ENCODE measurements at regions of chr3 and their contacts with region 1.

Region 1: GRCh38 chr3:13648060-13649001 is 99.4 kb downstream of the FBLN2 start:
- DNase-seq: peak; percentile 75
- ATAC-seq: peak; percentile 81
- H3K4me3 ChIP-seq: peak overlapping the region in 1 of 2 experiments; percentile 1; a peak in 1 of 4 replicates
- H3K27ac ChIP-seq: no peak overlapping the region
- H3K4me1 ChIP-seq: peaks cover 9 to 45% of the 10 kb centered on the region in 2 experiments; a peak in 3 of 4 replicates
- H3K27me3 ChIP-seq: no peaks in the 10 kb centered on the region
- CTCF ChIP-seq: peak in 2 of 3 experiments; percentile 98 to 99; a peak in 4 of 6 replicates
- POLR2A ChIP-seq: no peak
- RAD21 ChIP-seq: no peak

Region 2: DNA sequence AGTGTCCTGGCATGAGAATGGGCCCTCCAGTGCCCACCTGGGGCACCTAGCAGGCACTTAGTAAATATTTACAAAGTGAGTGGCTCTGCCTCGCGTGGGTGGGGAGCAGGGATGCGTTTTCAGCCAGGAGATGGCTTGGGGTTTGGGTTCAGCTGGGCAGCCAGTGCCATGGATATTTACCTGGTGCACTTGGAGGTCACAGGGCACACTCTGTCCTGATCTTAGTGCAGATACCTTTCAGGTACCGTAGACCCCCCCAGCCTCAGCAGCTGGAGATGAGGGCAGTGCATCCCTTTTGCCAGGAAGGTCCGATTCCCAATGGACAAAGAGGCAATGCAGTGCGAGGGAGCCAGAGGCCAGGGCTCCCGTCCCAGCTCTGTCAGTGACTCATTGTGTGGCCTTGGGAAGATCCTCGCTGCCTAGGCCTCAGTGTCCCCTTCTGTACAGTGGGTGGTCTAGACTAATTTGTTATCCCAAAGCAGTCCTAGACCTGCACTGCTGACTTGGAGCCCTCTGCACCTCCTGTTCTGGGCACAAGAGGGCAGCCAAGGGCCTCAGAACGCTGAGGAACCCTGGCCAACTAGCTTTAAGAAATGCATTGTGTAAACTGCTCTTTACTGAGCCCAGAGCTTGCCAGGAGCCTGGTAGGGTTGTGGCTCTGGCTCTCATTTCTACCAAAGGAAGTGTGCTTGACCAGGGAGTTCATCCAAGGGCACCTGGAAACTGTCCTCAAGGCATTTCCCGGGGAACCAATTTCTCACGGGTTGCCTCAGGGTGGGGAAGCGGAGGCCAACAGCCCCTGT is 152.2 kb before region 1 on chr3:
- CTCF ChIA-PET with region 1: interaction called, 245 read pairs
- POLR2A ChIA-PET with region 1: interaction called, 6 read pairs
- RAD21 ChIA-PET with region 1: interaction called, 24 to 34 read pairs
- intact Hi-C with region 1: loop called (anchors 1 kb)
- DNase-seq: peak; percentile 48
- ATAC-seq: peak; percentile 81
- H3K4me3 ChIP-seq: no peak overlapping the region
- H3K27ac ChIP-seq: no peak overlapping the region
- H3K4me1 ChIP-seq: peaks cover 0 to 11% of the 10 kb centered on the region in 2 experiments; a peak in 1 of 4 replicates
- H3K27me3 ChIP-seq: no peaks in the 10 kb centered on the region
- CTCF ChIP-seq: peak; percentile 93 to 96 (median 94)
- POLR2A ChIP-seq: no peak
- RAD21 ChIP-seq: peak; percentile 98

Region 3: GRCh38 chr3:14124615-14125190 is 476.4 kb after region 1 on chr3 and contains the starts of genes CHCHD4 and TMEM43:
- CTCF ChIA-PET with region 1: no interaction called
- POLR2A ChIA-PET with region 1: no interaction called
- RAD21 ChIA-PET with region 1: no interaction called
- intact Hi-C with region 1: loop called (anchors 10 kb)
- DNase-seq: peak; percentile 97
- ATAC-seq: peak; percentile 90
- H3K4me3 ChIP-seq: peak within 1 kb of the TSS; percentile 98 to 99
- H3K27ac ChIP-seq: peak within 1 kb of the TSS; percentile 87
- H3K4me1 ChIP-seq: peaks cover 8 to 20% of the 10 kb centered on the region in 2 experiments; a peak in 3 of 4 replicates
- H3K27me3 ChIP-seq: no peaks in the 10 kb centered on the region
- CTCF ChIP-seq: no peak
- POLR2A ChIP-seq: peak; percentile 14
- RAD21 ChIP-seq: no peak
- total RNA-seq, gene CHCHD4: 24.6 TPM
- total RNA-seq, gene TMEM43: 32.4 TPM